Heart left ventricle (tissue), 16 donors: ENCODE measurements at regions of chr1 and their contacts with region 1.

Region 1: GRCh38 chr1:200184196-200184595 is 156.7 kb downstream of the NR5A2 start:
- DNase-seq: peak; percentile 75 to 91 (median 84)
- ATAC-seq: peak; percentile 93 to 98 (median 96)
- H3K4me3 ChIP-seq: no peak overlapping the region
- H3K27ac ChIP-seq: peak overlapping the region in 10 of 12 donors; percentile 4 to 65 (median 33)
- H3K4me1 ChIP-seq: peaks cover 0 to 17% (median 10%) of the 10 kb centered on the region in 12 donors
- H3K27me3 ChIP-seq: no peaks in the 10 kb centered on the region
- CTCF ChIP-seq: no peak
- POLR2A ChIP-seq: no peak

Region 2: GRCh38 chr1:199954699-199955098 is 229.5 kb before region 1 on chr1:
- intact Hi-C with region 1: no loop called
- DNase-seq: no peak
- ATAC-seq: peak in 1 of 4 donors; percentile 37
- H3K4me3 ChIP-seq: no peak overlapping the region
- H3K27ac ChIP-seq: no peak overlapping the region
- H3K4me1 ChIP-seq: no peaks in the 10 kb centered on the region
- H3K27me3 ChIP-seq: no peaks in the 10 kb centered on the region
- CTCF ChIP-seq: peak; percentile 14 to 50 (median 33)
- POLR2A ChIP-seq: no peak

Region 3: GRCh38 chr1:200038981-200039848 is 145.0 kb before region 1 on chr1:
- intact Hi-C with region 1: loop called in 1 of 10 experiments (anchors 5 kb)
- DNase-seq: peak; percentile 34 to 68 (median 41)
- ATAC-seq: peak in 2 of 4 donors; percentile 47 to 50
- H3K4me3 ChIP-seq: peak overlapping the region; percentile 33 to 65 (median 55)
- H3K27ac ChIP-seq: peak overlapping the region in 10 of 12 donors; percentile 19 to 49 (median 34)
- H3K4me1 ChIP-seq: peaks cover 0 to 61% (median 36%) of the 10 kb centered on the region in 12 donors
- H3K27me3 ChIP-seq: peaks cover 62 to 100% (median 98%) of the 10 kb centered on the region in 9 donors
- CTCF ChIP-seq: no peak
- POLR2A ChIP-seq: no peak

Region 4: DNA sequence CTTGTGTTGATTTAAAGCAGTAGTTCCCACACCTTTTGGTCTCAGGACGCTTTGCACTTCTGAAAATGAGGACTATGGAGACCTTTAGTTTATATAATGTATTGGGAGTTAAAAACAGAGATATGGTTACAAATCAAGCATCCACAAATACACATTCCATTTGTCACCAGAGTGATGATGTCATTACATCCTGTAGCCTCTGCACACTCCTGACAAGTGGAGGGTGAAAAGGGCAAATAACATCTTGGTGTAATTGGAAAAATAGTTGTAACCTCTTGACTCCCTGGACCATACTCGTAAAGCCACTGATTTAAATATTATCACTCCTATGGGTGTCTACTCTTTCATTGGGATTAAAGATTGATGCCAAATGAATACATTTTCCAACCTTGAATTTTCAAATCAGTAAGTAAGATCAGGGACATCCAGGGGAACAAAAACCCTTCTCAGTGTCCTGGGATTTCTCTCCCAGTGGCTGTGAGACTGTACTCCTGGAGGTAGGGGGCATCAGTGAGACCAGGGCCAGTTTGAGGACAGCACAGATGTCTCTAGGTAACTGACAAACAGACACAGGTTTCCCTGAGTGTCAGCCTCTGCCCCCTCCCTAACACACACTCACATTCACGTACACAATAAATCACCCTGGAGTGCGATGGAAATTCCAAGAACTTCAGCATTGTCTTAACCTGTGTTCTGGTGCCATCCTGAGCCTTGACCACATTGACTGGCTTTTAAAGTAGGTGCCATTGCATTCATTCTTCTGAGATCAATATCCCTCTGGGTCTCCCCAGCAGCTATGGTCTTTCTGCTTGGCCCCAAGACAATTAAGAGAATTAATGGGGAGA is 93.7 kb before region 1 on chr1:
- intact Hi-C with region 1: no loop called
- DNase-seq: no peak
- ATAC-seq: no peak
- H3K4me3 ChIP-seq: no peak overlapping the region
- H3K27ac ChIP-seq: no peak overlapping the region
- H3K4me1 ChIP-seq: no peaks in the 10 kb centered on the region
- H3K27me3 ChIP-seq: peaks cover 0 to 4% (median 0%) of the 10 kb centered on the region in 9 donors
- CTCF ChIP-seq: peak in 3 of 12 donors; percentile 10 to 27 (median 14)
- POLR2A ChIP-seq: no peak